ENCODE measurements at regions of chr7 and their contacts with region 1.

Region 1: DNA sequence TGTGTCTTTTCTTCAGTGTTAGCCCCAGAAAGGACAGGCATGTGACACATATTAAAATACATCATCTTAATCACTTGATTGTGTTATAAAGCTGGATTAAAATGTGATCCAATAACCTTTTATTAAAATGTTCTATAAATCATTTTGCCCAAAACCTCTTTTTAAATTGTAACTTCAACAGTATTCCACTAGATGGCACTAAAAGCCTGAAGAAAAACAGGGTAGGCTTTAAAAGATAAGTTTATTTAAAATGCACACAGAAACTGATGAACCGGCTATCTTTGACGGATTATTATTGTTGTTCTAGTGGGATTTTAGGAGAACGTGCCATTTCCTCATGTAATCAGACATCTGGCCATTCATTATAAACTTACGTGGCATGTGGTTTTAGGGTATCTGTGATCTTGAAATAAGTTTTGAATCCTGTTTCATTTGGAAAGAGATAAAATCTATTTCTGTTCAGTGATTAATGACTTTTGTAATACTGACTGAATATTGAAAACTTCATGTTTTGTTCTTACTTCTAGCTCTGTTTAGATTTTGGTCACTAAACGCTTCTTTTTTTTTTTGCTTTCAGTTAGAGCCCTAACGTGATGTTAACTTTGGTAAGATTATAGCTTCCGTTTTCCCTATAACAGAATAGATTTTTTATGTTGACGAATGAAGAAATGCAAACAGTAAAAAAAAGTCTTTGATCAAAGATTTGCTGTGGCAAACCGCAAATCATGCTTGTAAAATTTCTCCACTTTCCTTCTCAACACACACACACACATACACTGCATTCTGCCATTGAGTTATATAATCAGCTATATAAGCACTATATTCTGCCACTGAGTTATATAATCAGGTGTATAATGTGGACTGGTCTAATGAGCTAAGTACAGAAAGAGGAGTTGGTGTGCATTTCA is 13.6 kb downstream of the VPS50 start:
- DNase-seq: peak; percentile 10
- H3K4me3 ChIP-seq: no peak overlapping the region
- H3K27ac ChIP-seq: no peak overlapping the region
- H3K27me3 ChIP-seq: no peaks in the 10 kb centered on the region
- CTCF ChIP-seq: peak; percentile 49

Region 2: GRCh38 chr7:93231799-93232672 is 13.7 kb before region 1 on chr7 and contains the start of gene VPS50:
- CTCF ChIA-PET with region 1: interaction called, 14 read pairs
- POLR2A ChIA-PET with region 1: no interaction called
- DNase-seq: peak; percentile 89
- H3K4me3 ChIP-seq: peak within 1 kb of the TSS; percentile 93
- H3K27ac ChIP-seq: no peak within 1 kb of the TSS
- H3K27me3 ChIP-seq: peaks cover 3% of the 10 kb centered on the region
- CTCF ChIP-seq: no peak
- polyA plus RNA-seq, gene VPS50: 15.2 and 21.8 TPM in 2 replicates

Region 3: DNA sequence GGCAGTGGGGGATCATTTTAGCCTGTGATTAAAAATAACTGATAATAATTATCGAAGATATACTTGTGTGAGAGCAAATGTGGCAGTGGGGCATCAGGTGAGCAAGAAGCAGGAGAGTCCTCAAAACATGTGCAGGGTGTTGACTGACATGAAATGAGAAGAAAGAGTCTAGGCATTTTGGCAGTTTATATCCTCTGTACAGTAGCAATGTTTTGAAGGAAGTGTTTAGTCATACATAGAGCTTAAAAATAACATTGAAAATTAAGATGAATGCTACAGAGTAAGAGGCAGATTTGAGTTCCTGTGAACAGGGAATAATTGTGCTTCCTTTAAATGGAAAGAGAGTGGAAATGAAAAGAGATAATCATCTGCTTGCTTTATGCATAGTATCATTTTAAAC is 33.8 kb after region 1 on chr7:
- CTCF ChIA-PET with region 1: interaction called, 10 read pairs
- POLR2A ChIA-PET with region 1: no interaction called
- DNase-seq: no peak
- H3K4me3 ChIP-seq: no peak overlapping the region
- H3K27ac ChIP-seq: no peak overlapping the region
- H3K27me3 ChIP-seq: no peaks in the 10 kb centered on the region
- CTCF ChIP-seq: no peak

Region 4: DNA sequence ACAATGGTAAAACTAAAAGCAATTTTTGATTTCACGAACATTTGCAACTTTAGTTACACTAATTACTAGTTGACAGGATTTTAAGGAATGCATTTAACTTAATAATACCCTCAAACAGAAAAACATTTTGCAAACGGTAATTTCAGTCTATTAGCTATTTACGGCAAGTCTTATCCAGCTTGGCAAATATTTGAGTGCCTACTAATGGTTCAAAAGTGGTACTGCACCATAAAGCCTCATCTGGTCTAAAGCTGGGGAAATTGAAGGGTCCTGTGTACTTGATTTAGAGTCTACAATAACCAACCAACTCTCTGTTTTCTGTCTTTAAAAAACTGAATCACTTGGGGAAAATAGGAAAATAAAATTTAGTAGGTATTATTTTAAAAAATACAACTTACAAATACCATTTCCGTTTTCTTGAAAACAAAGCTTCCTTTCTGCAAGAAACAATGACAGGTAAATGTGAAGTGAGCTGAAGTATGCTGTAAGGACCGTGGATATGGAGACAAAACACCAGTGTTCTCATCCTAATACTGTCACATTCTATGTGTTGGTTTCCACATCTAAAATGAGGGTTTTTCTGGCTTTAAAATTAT is 128.7 kb after region 1 on chr7:
- CTCF ChIA-PET with region 1: interaction called, 71 read pairs
- POLR2A ChIA-PET with region 1: no interaction called
- DNase-seq: peak; percentile 2
- H3K4me3 ChIP-seq: no peak overlapping the region
- H3K27ac ChIP-seq: no peak overlapping the region
- H3K27me3 ChIP-seq: peaks cover 2% of the 10 kb centered on the region
- CTCF ChIP-seq: peak; percentile 94

Region 5: GRCh38 chr7:93442478-93443224 is 196.9 kb after region 1 on chr7:
- CTCF ChIA-PET with region 1: interaction called, 14 read pairs
- POLR2A ChIA-PET with region 1: no interaction called
- DNase-seq: no peak
- H3K4me3 ChIP-seq: no peak overlapping the region
- H3K27ac ChIP-seq: no peak overlapping the region
- H3K27me3 ChIP-seq: no peaks in the 10 kb centered on the region
- CTCF ChIP-seq: peak; percentile 72

Region 6: GRCh38 chr7:93551063-93551904 is 305.5 kb after region 1 on chr7:
- CTCF ChIA-PET with region 1: interaction called, 180 read pairs
- POLR2A ChIA-PET with region 1: no interaction called
- DNase-seq: peak; percentile 18
- H3K4me3 ChIP-seq: no peak overlapping the region
- H3K27ac ChIP-seq: no peak overlapping the region
- H3K27me3 ChIP-seq: no peaks in the 10 kb centered on the region
- CTCF ChIP-seq: peak; percentile 65